Astrocyte of the cerebellum (primary cell): ENCODE measurements at regions of chr1 and their contacts with region 1.

Region 1: DNA sequence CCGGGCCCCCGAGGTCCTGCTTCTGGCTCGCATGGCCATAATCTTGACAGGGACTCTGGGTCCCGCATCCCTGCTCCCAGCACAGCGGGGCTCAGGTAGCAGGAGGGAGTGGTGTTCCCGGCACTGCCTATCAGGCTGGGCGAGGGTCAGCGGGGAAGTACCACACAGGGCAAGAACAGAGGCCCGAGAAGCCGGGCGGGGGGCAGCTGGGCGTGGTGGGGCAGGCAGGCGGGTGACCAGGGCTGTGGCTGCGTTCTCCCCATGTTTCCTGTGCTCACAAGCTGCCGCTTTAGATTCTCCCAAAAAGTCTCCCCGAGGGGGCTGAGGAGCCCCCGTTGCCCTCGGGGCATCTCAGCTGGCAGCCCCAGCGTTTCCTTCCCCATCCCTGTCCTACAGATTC is 18.3 kb downstream of the ATAD3B start:
- DNase-seq: no peak
- H3K4me3 ChIP-seq: no peak overlapping the region
- CTCF ChIP-seq: no peak

Region 2: GRCh38 chr1:1374929-1375662 is 114.8 kb before region 1 on chr1 and contains the start of gene AURKAIP1:
- in situ Hi-C with region 1: loop called (anchors 5 kb)
- DNase-seq: peak; percentile 100
- H3K4me3 ChIP-seq: peak within 1 kb of the TSS; percentile 88
- CTCF ChIP-seq: peak; percentile 25